Pancreas (tissue), 10 donors: ENCODE measurements at regions of chr11 and their contacts with region 1.

Region 1: DNA sequence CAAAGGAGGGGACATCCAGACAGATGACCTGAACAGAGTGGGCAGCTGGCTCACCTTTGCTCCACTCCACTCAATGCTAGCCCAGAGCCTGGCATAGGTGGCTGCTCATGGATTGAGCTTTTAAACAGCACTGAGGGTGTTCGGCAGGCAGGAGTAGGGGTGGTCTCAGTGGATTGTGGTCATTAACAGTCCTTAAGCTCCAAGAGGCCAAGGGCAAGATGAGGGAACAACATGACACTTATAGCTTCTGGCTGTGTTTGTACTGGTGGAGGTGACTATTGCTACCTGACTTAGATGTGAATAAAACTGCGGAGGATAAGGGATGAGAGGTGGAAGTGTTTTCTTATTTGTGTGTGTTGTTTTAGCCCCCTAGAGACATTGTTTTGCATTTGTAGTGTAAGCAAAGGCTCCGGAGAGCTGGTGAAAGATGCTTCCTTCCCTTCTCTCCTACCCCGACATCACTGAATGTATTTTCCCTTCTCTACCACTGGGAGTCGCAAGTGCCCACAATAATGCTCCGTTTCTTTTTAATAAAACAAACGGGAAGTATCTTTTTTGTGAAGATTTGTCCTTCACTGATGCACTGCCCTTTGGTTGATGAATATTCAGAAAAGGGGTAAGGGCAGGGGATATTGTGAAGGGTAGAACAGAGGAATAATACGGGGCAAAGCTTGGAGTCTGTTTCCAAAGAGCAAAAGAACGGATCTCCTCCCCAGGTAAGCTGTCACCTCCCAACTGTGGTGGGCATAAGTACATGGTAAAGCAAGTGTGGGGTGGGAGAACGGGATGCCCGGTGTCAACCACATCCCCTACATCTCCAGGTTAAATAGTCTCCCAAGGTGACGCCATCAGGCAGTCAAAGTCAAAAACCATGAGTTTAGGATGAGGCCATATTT is 27.5 kb upstream of the MTNR1B start:
- DNase-seq: peak in 1 of 6 donors; percentile 22
- ATAC-seq: peak; percentile 60 to 88 (median 84)
- H3K4me3 ChIP-seq: no peak overlapping the region
- H3K27ac ChIP-seq: no peak overlapping the region
- H3K4me1 ChIP-seq: no peaks in the 10 kb centered on the region
- H3K27me3 ChIP-seq: no peaks in the 10 kb centered on the region
- CTCF ChIP-seq: peak; percentile 19 to 55 (median 46)

Region 2: GRCh38 chr11:93225662-93226061 is 283.7 kb after region 1 on chr11:
- intact Hi-C with region 1: loop called in 1 of 3 experiments (anchors 10 kb)
- DNase-seq: no peak
- ATAC-seq: peak in 2 of 4 donors; percentile 21 to 36
- H3K4me3 ChIP-seq: no peak overlapping the region
- H3K27ac ChIP-seq: no peak overlapping the region
- H3K4me1 ChIP-seq: peaks cover 0 to 14% (median 12%) of the 10 kb centered on the region in 3 donors
- H3K27me3 ChIP-seq: no peaks in the 10 kb centered on the region
- CTCF ChIP-seq: peak in 1 of 4 donors; percentile 16

Region 3: DNA sequence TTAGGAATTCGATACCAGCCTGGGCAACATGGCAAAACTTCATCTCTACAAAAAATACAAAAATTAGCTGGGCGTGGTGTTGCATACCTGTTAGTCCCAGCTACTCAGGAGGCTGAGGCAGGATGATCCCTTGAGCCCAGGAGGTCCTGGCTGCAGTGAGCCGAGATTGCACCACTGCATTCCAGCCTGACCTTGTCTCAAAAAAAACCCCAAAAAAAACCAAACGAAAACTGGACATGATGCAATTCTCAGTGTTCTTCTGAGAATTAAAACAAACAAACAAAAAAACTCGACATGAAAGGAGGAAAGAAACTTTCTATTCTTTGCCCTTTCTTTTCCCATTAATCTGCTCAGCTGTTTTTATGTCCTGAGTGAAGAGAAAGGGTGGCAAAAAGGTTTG is 849.6 kb after region 1 on chr11:
- intact Hi-C with region 1: no loop called
- DNase-seq: no peak
- ATAC-seq: no peak
- H3K4me3 ChIP-seq: no peak overlapping the region
- H3K27ac ChIP-seq: no peak overlapping the region
- H3K4me1 ChIP-seq: peaks cover 0 to 8% (median 5%) of the 10 kb centered on the region in 3 donors
- H3K27me3 ChIP-seq: no peaks in the 10 kb centered on the region
- CTCF ChIP-seq: no peak